ENCODE measurements at regions of chr3 and their contacts with region 1.

Region 1: DNA sequence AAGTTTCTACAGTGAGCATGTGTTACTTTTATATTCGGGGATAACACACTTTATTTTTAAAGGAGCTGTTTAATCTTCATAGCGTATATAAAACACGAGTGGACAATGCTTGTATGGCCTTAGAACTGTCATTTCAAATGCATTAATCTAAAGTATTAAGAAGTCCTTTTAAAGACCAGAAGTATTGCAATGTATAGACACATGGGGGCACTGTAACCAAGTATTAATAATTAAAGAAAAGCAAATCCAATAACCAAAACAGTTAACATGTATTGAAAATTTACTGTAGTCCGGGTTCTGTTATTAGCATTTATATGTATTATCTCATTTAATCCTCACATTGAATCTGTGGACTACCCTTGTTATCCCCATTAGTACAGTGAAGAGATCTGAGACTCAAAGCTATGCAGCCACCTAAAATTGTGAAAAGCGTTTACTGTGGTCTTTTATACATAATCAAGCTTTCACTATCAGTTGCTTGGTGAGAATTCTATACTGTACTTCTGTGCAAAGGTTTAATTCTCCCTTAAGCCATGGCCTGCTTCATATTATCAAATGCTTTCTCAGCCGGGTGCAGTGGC is 10.1 kb downstream of the ARL14 start:
- DNase-seq: no peak
- H3K4me3 ChIP-seq: no peak overlapping the region
- H3K27me3 ChIP-seq: no peaks in the 10 kb centered on the region
- CTCF ChIP-seq: peak; percentile 47

Region 2: GRCh38 chr3:160676547-160677303 is 10.3 kb before region 1 on chr3 and contains the start of gene ARL14:
- CTCF ChIA-PET with region 1: interaction called, 20 read pairs
- POLR2A ChIA-PET with region 1: no interaction called
- DNase-seq: no peak
- H3K4me3 ChIP-seq: no peak within 1 kb of the TSS
- H3K27me3 ChIP-seq: no peaks in the 10 kb centered on the region
- CTCF ChIP-seq: no peak
- polyA plus RNA-seq, gene ARL14: not detected in 2 replicates

Region 3: GRCh38 chr3:160754855-160755747 is 68.1 kb after region 1 on chr3:
- CTCF ChIA-PET with region 1: interaction called, 12 read pairs
- POLR2A ChIA-PET with region 1: no interaction called
- DNase-seq: peak; percentile 69
- H3K4me3 ChIP-seq: peak overlapping the region; percentile 63
- H3K27me3 ChIP-seq: peaks cover 13% of the 10 kb centered on the region
- CTCF ChIP-seq: no peak

Region 4: GRCh38 chr3:160941885-160942494 is 254.9 kb after region 1 on chr3:
- CTCF ChIA-PET with region 1: interaction called, 14 read pairs
- POLR2A ChIA-PET with region 1: no interaction called
- DNase-seq: no peak
- H3K4me3 ChIP-seq: no peak overlapping the region
- H3K27me3 ChIP-seq: no peaks in the 10 kb centered on the region; the same call in 1 of the 2 replicates
- CTCF ChIP-seq: peak; percentile 85